OCI-LY7 (cell line): ENCODE measurements at regions of chr16 and their contacts with region 1.

Region 1: GRCh38 chr16:29664091-29664921 is 1.3 kb downstream of the SPN start:
- DNase-seq: peak; percentile 83
- H3K4me3 ChIP-seq: peak overlapping the region; percentile 78
- H3K27ac ChIP-seq: peak overlapping the region; percentile 81
- H3K4me1 ChIP-seq: peaks cover 39% of the 10 kb centered on the region
- CTCF ChIP-seq: peak; percentile 67

Region 2: DNA sequence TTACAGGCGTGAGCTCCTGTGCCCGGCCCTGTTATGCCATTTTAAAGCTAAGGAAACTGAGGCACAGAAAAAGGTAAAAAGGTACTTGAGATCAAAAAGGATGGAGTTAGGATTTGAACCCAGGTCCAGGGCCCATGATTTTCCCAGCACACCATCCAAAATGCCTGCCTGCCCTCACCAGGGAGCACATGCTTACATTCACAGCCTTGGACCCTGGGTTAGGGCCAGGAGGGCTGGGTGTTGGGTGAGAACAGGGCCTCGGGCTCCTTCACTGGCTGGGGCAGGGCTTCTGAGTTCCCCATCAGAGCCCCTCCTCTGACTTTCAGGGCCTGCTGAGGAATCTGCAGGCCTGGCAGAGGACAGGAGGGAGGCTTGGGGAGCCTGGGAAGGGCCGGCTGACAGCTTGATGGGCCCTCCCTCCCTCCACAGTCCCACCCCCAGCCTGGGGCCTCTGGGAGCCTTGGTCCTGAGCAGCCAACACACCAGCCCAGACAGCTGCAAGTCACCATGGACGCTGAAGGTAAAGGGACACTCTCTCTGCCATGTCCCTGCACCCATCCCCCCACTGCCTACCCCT is 14.5 kb after region 1 on chr16 and contains the start of gene QPRT:
- CTCF ChIA-PET with region 1: no interaction called
- POLR2A ChIA-PET with region 1: interaction called, 11 read pairs
- intact Hi-C with region 1: no loop called
- DNase-seq: peak; percentile 31
- H3K4me3 ChIP-seq: peak within 1 kb of the TSS; percentile 68
- H3K27ac ChIP-seq: peak within 1 kb of the TSS; percentile 79
- H3K4me1 ChIP-seq: peaks cover 28% of the 10 kb centered on the region
- CTCF ChIP-seq: no peak
- total RNA-seq, gene QPRT: 9.4 and 10.6 TPM in 2 replicates

Region 3: GRCh38 chr16:29745853-29746345 is 81.6 kb after region 1 on chr16 and contains the start of gene C16orf54:
- CTCF ChIA-PET with region 1: no interaction called
- POLR2A ChIA-PET with region 1: no interaction called
- intact Hi-C with region 1: no loop called
- DNase-seq: no peak
- H3K4me3 ChIP-seq: no peak within 1 kb of the TSS
- H3K27ac ChIP-seq: no peak within 1 kb of the TSS
- H3K4me1 ChIP-seq: no peaks in the 10 kb centered on the region
- CTCF ChIP-seq: no peak
- total RNA-seq, gene C16orf54: not detected in 2 replicates